ENCODE measurements at regions of chr13 and their contacts with region 1.

Region 1: DNA sequence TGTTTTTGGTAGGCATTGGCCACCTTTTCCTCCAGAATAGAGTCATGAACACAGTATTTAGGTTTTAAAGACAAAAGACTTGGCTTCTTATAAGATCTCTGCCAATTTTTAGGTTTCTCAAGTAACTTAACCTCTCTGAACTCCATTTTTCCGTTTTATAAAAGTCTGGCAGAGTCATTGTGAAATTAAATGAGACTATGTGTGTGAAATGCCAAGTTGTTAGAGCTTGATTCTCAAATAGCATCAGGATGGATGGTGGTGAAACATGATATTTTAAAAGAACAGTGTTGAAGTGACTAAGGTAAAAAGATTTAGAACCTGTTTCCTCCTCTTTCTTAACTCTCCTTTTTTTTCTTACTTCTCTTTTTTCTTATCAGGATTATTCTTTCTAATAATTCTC is 617.7 kb upstream of the SLITRK1 start:
- DNase-seq: no peak
- ATAC-seq: no peak
- H3K4me3 ChIP-seq: no peak overlapping the region
- H3K27ac ChIP-seq: no peak overlapping the region
- H3K4me1 ChIP-seq: no peaks in the 10 kb centered on the region
- H3K27me3 ChIP-seq: no peaks in the 10 kb centered on the region
- CTCF ChIP-seq: no peak
- EP300 ChIP-seq: no peak
- POLR2A ChIP-seq: no peak
- RAD21 ChIP-seq: no peak

Region 2: DNA sequence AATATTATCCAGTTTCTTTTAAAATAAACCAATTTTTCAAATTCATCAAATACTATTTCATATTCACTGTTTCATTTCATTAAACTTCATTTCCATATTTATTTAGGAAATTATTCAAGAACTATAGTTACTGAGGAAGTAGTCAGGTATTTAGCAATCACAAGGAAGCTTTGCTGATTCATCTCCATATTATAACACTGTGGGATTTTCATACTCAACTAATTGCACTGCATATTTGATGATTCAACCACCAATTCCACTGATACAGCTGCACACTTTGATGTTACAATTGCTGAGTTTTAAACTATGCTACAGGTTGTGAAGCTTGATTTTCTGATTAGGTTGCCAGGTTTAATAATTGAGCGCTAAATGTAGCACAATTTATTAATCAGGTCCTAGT is 60.9 kb before region 1 on chr13:
- CTCF ChIA-PET with region 1: no interaction called
- POLR2A ChIA-PET with region 1: no interaction called
- RAD21 ChIA-PET with region 1: no interaction called
- SMC1A ChIA-PET with region 1: no interaction called
- in situ Hi-C with region 1: no loop called
- intact Hi-C with region 1: no loop called
- DNase-seq: no peak
- ATAC-seq: no peak
- H3K4me3 ChIP-seq: no peak overlapping the region
- H3K27ac ChIP-seq: no peak overlapping the region
- H3K4me1 ChIP-seq: no peaks in the 10 kb centered on the region
- H3K27me3 ChIP-seq: no peaks in the 10 kb centered on the region
- CTCF ChIP-seq: no peak
- EP300 ChIP-seq: no peak
- POLR2A ChIP-seq: no peak
- RAD21 ChIP-seq: no peak

Region 3: DNA sequence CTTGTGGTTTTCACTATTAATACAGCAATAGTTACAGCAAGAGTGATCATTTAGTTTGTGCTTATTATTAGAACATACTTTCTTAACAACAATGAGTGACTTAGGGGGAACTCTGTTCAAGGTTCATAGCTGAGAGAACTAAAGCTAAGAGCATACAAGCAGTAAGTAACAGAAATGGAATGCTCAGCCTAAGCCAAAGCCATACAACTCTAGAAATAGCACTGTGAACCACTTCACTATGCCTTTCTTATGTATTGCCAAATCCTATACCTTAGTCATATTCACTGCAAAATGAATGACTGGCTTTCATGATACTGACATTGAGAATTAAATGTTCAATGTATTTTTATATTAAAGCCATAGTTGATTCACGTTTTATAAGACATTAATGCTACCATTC is 18.1 kb before region 1 on chr13:
- CTCF ChIA-PET with region 1: interaction called, 5 read pairs
- POLR2A ChIA-PET with region 1: no interaction called
- RAD21 ChIA-PET with region 1: interaction called, 10 read pairs
- SMC1A ChIA-PET with region 1: interaction called, 18 read pairs
- in situ Hi-C with region 1: no loop called
- intact Hi-C with region 1: no loop called
- DNase-seq: no peak
- ATAC-seq: peak; percentile 27; the same call in 2 of the 3 replicates
- H3K4me3 ChIP-seq: no peak overlapping the region
- H3K27ac ChIP-seq: no peak overlapping the region
- H3K4me1 ChIP-seq: no peaks in the 10 kb centered on the region
- H3K27me3 ChIP-seq: no peaks in the 10 kb centered on the region
- CTCF ChIP-seq: no peak
- EP300 ChIP-seq: no peak
- POLR2A ChIP-seq: no peak
- RAD21 ChIP-seq: no peak

Region 4: DNA sequence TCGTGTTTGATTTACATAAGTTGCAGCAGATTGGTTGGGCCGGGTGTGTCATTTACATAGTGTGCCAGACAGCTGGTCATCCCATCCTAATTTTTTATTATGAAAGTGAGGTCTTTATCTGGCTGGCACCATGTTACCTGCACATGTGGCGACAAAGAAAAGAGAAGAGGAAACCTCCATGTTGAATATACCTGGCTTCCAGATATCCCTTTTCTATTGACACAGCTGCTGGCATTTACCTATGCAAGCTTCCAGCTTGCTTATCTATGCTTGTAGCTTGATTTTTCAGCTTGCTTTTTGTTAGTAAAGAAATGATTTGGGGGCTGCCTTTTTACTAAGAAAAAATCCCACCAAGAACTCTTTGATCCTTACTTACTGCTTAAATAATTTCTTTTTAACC is 63.6 kb after region 1 on chr13:
- CTCF ChIA-PET with region 1: interaction called, 4 read pairs
- POLR2A ChIA-PET with region 1: no interaction called
- RAD21 ChIA-PET with region 1: interaction called, 11 read pairs
- SMC1A ChIA-PET with region 1: interaction called, 31 read pairs
- in situ Hi-C with region 1: no loop called
- intact Hi-C with region 1: no loop called
- DNase-seq: no peak
- ATAC-seq: no peak
- H3K4me3 ChIP-seq: no peak overlapping the region
- H3K27ac ChIP-seq: no peak overlapping the region
- H3K4me1 ChIP-seq: no peaks in the 10 kb centered on the region
- H3K27me3 ChIP-seq: no peaks in the 10 kb centered on the region
- CTCF ChIP-seq: no peak
- EP300 ChIP-seq: no peak
- POLR2A ChIP-seq: no peak
- RAD21 ChIP-seq: no peak

Region 5: DNA sequence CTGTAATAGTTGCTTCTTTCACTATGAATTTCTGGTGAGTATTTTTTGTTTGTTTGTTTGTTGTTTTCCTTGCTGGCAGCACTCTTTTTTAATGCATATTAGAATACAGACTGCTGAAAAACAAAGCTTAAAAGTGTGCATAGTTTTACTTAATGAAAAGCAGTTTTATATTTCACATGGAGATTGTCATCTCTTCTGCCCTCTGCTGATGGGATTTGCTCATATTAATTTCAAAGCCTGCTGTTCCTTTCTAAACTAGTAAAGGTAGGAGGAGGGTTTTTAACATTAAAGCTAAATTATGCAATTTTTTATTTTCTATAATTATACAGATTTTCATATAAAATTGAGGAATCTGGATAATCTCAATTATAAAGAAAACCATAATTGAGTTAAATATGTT is 74.8 kb after region 1 on chr13:
- CTCF ChIA-PET with region 1: interaction called, 11 read pairs
- POLR2A ChIA-PET with region 1: no interaction called
- RAD21 ChIA-PET with region 1: interaction called, 12 read pairs
- SMC1A ChIA-PET with region 1: interaction called, 26 read pairs
- in situ Hi-C with region 1: no loop called
- intact Hi-C with region 1: no loop called
- DNase-seq: no peak
- ATAC-seq: 0 out of 3 replicates have a peak, but pooled peaks have one; percentile 42
- H3K4me3 ChIP-seq: no peak overlapping the region
- H3K27ac ChIP-seq: no peak overlapping the region
- H3K4me1 ChIP-seq: no peaks in the 10 kb centered on the region
- H3K27me3 ChIP-seq: no peaks in the 10 kb centered on the region
- CTCF ChIP-seq: no peak; a peak in 1 of 6 replicates
- EP300 ChIP-seq: no peak
- POLR2A ChIP-seq: no peak
- RAD21 ChIP-seq: peak; percentile 5; the same call in 1 of the 2 replicates

Measured in GM12878 (cell line).